Naive thymus-derived CD4-positive, alpha-beta T cell (primary cell): ENCODE measurements at regions of chr2 and their contacts with region 1.

Region 1: GRCh38 chr2:38315707-38316333 is 61.3 kb downstream of the ATL2 start:
- DNase-seq: peak in 7 of 9 donors; percentile 14 to 50 (median 33)
- ATAC-seq: peak; percentile 66
- H3K4me3 ChIP-seq: no peak overlapping the region
- H3K4me3 Mint-ChIP-seq: no peak overlapping the region
- H3K27ac ChIP-seq: no peak overlapping the region
- H3K27ac Mint-ChIP-seq: no peak overlapping the region
- H3K4me1 ChIP-seq: no peaks in the 10 kb centered on the region
- H3K4me1 Mint-ChIP-seq: peaks cover 0 to 6% (median 0%) of the 10 kb centered on the region in 7 donors
- H3K27me3 ChIP-seq: no peaks in the 10 kb centered on the region
- H3K27me3 Mint-ChIP-seq: no peaks in the 10 kb centered on the region

Region 2: GRCh38 chr2:37858197-37858711 is 457.6 kb before region 1 on chr2:
- CTCF ChIA-PET with region 1: no interaction called
- POLR2A ChIA-PET with region 1: no interaction called
- intact Hi-C with region 1: no loop called
- DNase-seq: no peak
- ATAC-seq: no peak
- H3K4me3 ChIP-seq: no peak overlapping the region
- H3K4me3 Mint-ChIP-seq: no peak overlapping the region
- H3K27ac ChIP-seq: no peak overlapping the region
- H3K27ac Mint-ChIP-seq: no peak overlapping the region
- H3K4me1 ChIP-seq: no peaks in the 10 kb centered on the region
- H3K4me1 Mint-ChIP-seq: peaks cover 0 to 5% (median 0%) of the 10 kb centered on the region in 7 donors
- H3K27me3 ChIP-seq: no peaks in the 10 kb centered on the region
- H3K27me3 Mint-ChIP-seq: peaks cover 3 to 16% (median 13%) of the 10 kb centered on the region in 5 donors

Region 3: DNA sequence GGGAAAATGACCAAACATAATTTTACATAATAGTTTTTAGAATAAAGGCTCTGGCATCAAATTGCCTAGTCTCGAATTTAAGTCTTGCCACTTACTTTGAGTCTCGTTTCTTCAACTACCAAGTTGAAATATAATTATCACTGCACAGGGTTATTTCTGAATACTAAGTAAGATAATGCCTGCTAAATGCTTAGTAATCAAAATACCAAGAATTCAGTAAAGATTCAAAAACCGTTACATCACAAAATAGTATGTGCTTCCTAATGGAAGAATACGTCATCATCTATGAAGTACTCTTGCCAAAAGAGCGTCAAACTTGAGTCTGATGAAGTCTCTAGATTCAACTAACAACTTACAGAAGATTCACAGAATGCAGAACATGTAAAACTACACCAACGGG is 20.8 kb after region 1 on chr2:
- CTCF ChIA-PET with region 1: no interaction called
- POLR2A ChIA-PET with region 1: no interaction called
- intact Hi-C with region 1: no loop called
- DNase-seq: no peak
- ATAC-seq: no peak
- H3K4me3 ChIP-seq: no peak overlapping the region
- H3K4me3 Mint-ChIP-seq: no peak overlapping the region
- H3K27ac ChIP-seq: no peak overlapping the region
- H3K27ac Mint-ChIP-seq: no peak overlapping the region
- H3K4me1 ChIP-seq: no peaks in the 10 kb centered on the region
- H3K4me1 Mint-ChIP-seq: peaks cover 0 to 4% (median 0%) of the 10 kb centered on the region in 7 donors
- H3K27me3 ChIP-seq: no peaks in the 10 kb centered on the region
- H3K27me3 Mint-ChIP-seq: no peaks in the 10 kb centered on the region

Region 4: DNA sequence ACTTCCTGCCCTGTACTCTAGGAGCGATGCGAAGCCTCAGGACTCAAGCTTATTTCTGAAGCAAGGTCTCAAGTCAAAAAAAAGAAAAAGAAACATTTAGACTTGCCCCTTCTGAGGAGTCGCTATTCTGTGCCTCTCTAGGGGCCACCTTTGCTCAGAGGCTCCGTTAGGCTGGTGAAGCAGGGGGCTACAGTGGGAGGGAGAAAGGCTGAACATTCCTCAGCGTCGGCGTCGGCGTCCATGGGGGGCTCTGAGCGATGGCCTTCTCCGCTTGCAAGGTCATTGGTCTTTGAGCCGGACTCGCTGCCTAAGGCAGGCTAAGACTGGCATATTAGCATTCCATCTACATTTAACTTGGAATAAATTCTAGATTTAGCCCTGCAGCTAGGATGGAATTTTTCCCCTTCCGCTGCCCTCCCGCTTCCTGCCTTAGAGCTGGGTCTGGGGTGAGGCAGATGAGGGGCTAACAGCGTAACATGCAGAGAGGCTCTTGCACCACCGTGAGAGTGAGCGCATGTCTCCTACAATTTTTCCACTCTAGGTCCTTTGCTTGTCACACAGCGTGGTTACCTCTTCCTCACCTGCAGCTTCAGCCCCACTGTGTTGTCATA is 114.9 kb after region 1 on chr2:
- CTCF ChIA-PET with region 1: interaction called, 3 read pairs
- POLR2A ChIA-PET with region 1: no interaction called
- intact Hi-C with region 1: loop called in 1 of 2 experiments (anchors 1 kb)
- DNase-seq: no peak
- ATAC-seq: no peak
- H3K4me3 ChIP-seq: no peak overlapping the region
- H3K4me3 Mint-ChIP-seq: no peak overlapping the region
- H3K27ac ChIP-seq: no peak overlapping the region
- H3K27ac Mint-ChIP-seq: no peak overlapping the region
- H3K4me1 ChIP-seq: no peaks in the 10 kb centered on the region
- H3K4me1 Mint-ChIP-seq: peaks cover 0 to 2% (median 0%) of the 10 kb centered on the region in 7 donors
- H3K27me3 ChIP-seq: no peaks in the 10 kb centered on the region
- H3K27me3 Mint-ChIP-seq: peaks cover 0 to 9% (median 0%) of the 10 kb centered on the region in 5 donors

Region 5: DNA sequence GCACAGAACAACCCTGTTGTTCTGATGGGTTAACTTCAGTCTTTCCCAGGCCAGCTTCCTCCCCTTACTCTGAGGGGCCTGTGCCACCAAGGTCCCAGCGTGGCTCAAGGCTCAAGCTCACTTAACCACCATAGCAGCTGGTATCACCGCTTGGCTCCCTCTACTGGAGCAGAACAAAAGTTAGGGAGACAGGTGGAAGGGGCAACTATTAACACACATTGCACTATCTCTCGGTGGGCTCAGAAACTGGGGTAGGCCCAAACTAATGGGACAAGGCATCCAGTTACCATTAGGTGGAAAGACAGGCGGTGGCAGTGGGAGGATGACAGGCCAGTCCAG is 149.9 kb after region 1 on chr2:
- CTCF ChIA-PET with region 1: interaction called, 13 read pairs
- POLR2A ChIA-PET with region 1: no interaction called
- intact Hi-C with region 1: loop called (anchors 1 to 5 kb)
- DNase-seq: peak in 6 of 9 donors; percentile 2 to 23 (median 14)
- ATAC-seq: peak; percentile 45
- H3K4me3 ChIP-seq: no peak overlapping the region
- H3K4me3 Mint-ChIP-seq: no peak overlapping the region
- H3K27ac ChIP-seq: no peak overlapping the region
- H3K27ac Mint-ChIP-seq: peak overlapping the region in 2 of 9 donors; percentile 35 to 66
- H3K4me1 ChIP-seq: no peaks in the 10 kb centered on the region
- H3K4me1 Mint-ChIP-seq: peaks cover 0 to 5% (median 0%) of the 10 kb centered on the region in 7 donors
- H3K27me3 ChIP-seq: no peaks in the 10 kb centered on the region
- H3K27me3 Mint-ChIP-seq: peaks cover 0 to 16% (median 0%) of the 10 kb centered on the region in 5 donors

Region 6: DNA sequence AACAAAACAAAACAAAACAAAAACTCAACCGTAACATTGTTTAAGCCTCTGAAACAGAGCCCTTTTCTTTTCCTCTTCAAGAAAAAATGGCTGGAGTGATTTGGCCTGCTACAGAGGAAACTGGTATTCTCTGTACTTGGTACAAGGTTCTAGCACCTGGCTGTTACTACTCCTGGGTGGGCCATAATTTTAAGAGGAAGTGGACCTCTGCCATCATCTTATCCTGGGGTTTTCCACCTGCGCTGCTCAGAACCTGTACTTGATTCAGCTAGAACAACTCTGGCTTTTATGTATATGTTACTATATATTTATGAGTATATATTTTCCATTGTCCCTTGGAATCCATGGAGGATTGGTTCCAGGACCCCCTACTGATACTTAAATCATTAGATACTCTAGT is 412.9 kb after region 1 on chr2:
- CTCF ChIA-PET with region 1: interaction called, 6 read pairs
- POLR2A ChIA-PET with region 1: no interaction called
- intact Hi-C with region 1: loop called (anchors 5 kb)
- DNase-seq: no peak
- ATAC-seq: no peak
- H3K4me3 ChIP-seq: no peak overlapping the region
- H3K4me3 Mint-ChIP-seq: no peak overlapping the region
- H3K27ac ChIP-seq: no peak overlapping the region
- H3K27ac Mint-ChIP-seq: no peak overlapping the region
- H3K4me1 ChIP-seq: peaks cover 0 to 3% of the 10 kb centered on the region in 2 donors
- H3K4me1 Mint-ChIP-seq: peaks cover 0 to 26% (median 4%) of the 10 kb centered on the region in 7 donors
- H3K27me3 ChIP-seq: no peaks in the 10 kb centered on the region
- H3K27me3 Mint-ChIP-seq: no peaks in the 10 kb centered on the region

Region 7: DNA sequence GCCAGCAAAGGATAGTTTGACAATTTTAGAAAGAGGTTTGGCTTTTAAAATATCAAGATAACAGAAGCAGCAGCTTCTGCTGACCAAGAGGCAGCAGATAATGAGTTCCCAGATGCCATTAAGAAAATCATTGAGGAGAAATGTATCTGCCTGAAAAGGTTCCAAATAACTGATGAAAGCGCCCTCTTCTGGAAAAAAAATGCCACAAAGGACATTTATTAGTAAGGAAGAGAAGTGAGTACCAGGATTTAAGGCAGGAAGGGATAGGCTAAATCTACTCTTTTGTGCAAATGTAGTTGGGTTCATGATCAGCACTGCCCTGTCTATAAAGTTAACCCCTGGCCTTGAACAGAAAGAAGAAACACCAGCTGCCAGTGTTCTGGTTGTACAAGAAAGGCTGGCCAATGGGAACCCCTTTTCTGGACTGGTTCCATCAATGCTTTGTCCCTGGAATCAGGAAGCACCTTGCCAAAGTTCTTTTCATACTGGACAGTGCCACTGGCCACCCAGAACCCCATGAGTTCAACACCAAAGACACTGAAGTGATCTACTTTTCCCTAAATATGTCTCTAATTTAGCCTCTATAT is 519.3 kb after region 1 on chr2:
- CTCF ChIA-PET with region 1: no interaction called
- POLR2A ChIA-PET with region 1: no interaction called
- intact Hi-C with region 1: no loop called
- DNase-seq: peak in 1 of 9 donors; percentile 5
- ATAC-seq: no peak
- H3K4me3 ChIP-seq: no peak overlapping the region
- H3K4me3 Mint-ChIP-seq: no peak overlapping the region
- H3K27ac ChIP-seq: no peak overlapping the region
- H3K27ac Mint-ChIP-seq: no peak overlapping the region
- H3K4me1 ChIP-seq: no peaks in the 10 kb centered on the region
- H3K4me1 Mint-ChIP-seq: peaks cover 0 to 2% (median 0%) of the 10 kb centered on the region in 7 donors
- H3K27me3 ChIP-seq: no peaks in the 10 kb centered on the region
- H3K27me3 Mint-ChIP-seq: no peaks in the 10 kb centered on the region